ENCODE measurements at regions of chr6 and their contacts with region 1.

Region 1: GRCh38 chr6:31827286-31828079 is at the start of gene HSPA1B:
- DNase-seq: peak; percentile 96 to 99
- ATAC-seq: peak; percentile 85 to 93
- H3K4me3 ChIP-seq: peak within 1 kb of the TSS; percentile 48
- H3K27ac ChIP-seq: peak within 1 kb of the TSS; percentile 88 to 94
- H3K4me1 ChIP-seq: peaks cover 38% of the 10 kb centered on the region
- CTCF ChIP-seq: no peak
- EP300 ChIP-seq: no peak
- POLR2A ChIP-seq: peak; percentile 100
- RAD21 ChIP-seq: no peak
- polyA plus RNA-seq, gene HSPA1B: 52.7 and 70.6 TPM in 2 replicates

Region 2: GRCh38 chr6:31729515-31729978 is 97.9 kb before region 1 on chr6:
- CTCF ChIA-PET with region 1: interaction called, 16 read pairs
- POLR2A ChIA-PET with region 1: interaction called, 9 read pairs
- DNase-seq: peak; percentile 80 to 85
- ATAC-seq: peak; percentile 85 to 88
- H3K4me3 ChIP-seq: peak overlapping the region; percentile 58
- H3K27ac ChIP-seq: peak overlapping the region; percentile 76 to 95
- H3K4me1 ChIP-seq: peaks cover 17% of the 10 kb centered on the region
- CTCF ChIP-seq: peak; percentile 68
- EP300 ChIP-seq: no peak
- POLR2A ChIP-seq: peak; percentile 35
- RAD21 ChIP-seq: peak; percentile 77 to 85; a peak in 4 of 5 replicates

Region 3: GRCh38 chr6:31769684-31770371 is 57.7 kb before region 1 on chr6:
- CTCF ChIA-PET with region 1: interaction called, 36 read pairs
- POLR2A ChIA-PET with region 1: interaction called, 6 read pairs
- DNase-seq: peak; percentile 68 to 81
- ATAC-seq: peak; percentile 82 to 84
- H3K4me3 ChIP-seq: no peak overlapping the region
- H3K27ac ChIP-seq: no peak overlapping the region
- H3K4me1 ChIP-seq: peaks cover under 1% of the 10 kb centered on the region; the same call in 2 of the 3 replicates
- CTCF ChIP-seq: peak; percentile 54
- EP300 ChIP-seq: no peak
- POLR2A ChIP-seq: no peak
- RAD21 ChIP-seq: peak; percentile 51 to 61

Region 4: GRCh38 chr6:31795616-31796298 is 31.7 kb before region 1 on chr6 and contains the start of gene VARS1:
- CTCF ChIA-PET with region 1: interaction called, 19 read pairs
- POLR2A ChIA-PET with region 1: interaction called, 19 read pairs
- DNase-seq: peak; percentile 88 to 92
- ATAC-seq: peak; percentile 88 to 91
- H3K4me3 ChIP-seq: peak within 1 kb of the TSS; percentile 97
- H3K27ac ChIP-seq: peak within 1 kb of the TSS; percentile 94 to 97
- H3K4me1 ChIP-seq: peaks cover 23% of the 10 kb centered on the region; the same call in 2 of the 3 replicates
- CTCF ChIP-seq: peak; percentile 67
- EP300 ChIP-seq: no peak
- POLR2A ChIP-seq: no peak; the same call in none of the 2 replicates
- RAD21 ChIP-seq: peak; percentile 31 to 70; a peak in 4 of 5 replicates
- polyA plus RNA-seq, gene VARS1: 17.7 and 24.7 TPM in 2 replicates

Region 5: GRCh38 chr6:31806465-31807272 is 20.8 kb before region 1 on chr6 and contains the start of gene LSM2:
- CTCF ChIA-PET with region 1: interaction called, 5 read pairs
- POLR2A ChIA-PET with region 1: interaction called, 17 read pairs
- DNase-seq: peak; percentile 89 to 94
- ATAC-seq: peak; percentile 96 to 97
- H3K4me3 ChIP-seq: peak within 1 kb of the TSS; percentile 56
- H3K27ac ChIP-seq: peak within 1 kb of the TSS; percentile 84 to 92
- H3K4me1 ChIP-seq: peaks cover 12% of the 10 kb centered on the region
- CTCF ChIP-seq: peak; percentile 31
- EP300 ChIP-seq: no peak
- POLR2A ChIP-seq: peak; percentile 40
- RAD21 ChIP-seq: no peak; a peak in 1 of 5 replicates
- polyA plus RNA-seq, gene LSM2: 54.7 and 73.8 TPM in 2 replicates

Region 6: GRCh38 chr6:31815025-31815838 is 12.3 kb before region 1 on chr6 and contains the starts of genes HSPA1A and HSPA1L:
- CTCF ChIA-PET with region 1: interaction called, 6 read pairs
- POLR2A ChIA-PET with region 1: interaction called, 82 read pairs
- DNase-seq: peak; percentile 93 to 97
- ATAC-seq: peak; percentile 78 to 89
- H3K4me3 ChIP-seq: peak within 1 kb of the TSS; percentile 59
- H3K27ac ChIP-seq: peak within 1 kb of the TSS; percentile 96 to 97
- H3K4me1 ChIP-seq: peaks cover 30% of the 10 kb centered on the region
- CTCF ChIP-seq: no peak
- EP300 ChIP-seq: no peak
- POLR2A ChIP-seq: peak; percentile 100
- RAD21 ChIP-seq: no peak
- polyA plus RNA-seq, gene HSPA1A: 88.2 and 122 TPM in 2 replicates
- polyA plus RNA-seq, gene HSPA1L: 1.2 and 1.6 TPM in 2 replicates

Region 7: DNA sequence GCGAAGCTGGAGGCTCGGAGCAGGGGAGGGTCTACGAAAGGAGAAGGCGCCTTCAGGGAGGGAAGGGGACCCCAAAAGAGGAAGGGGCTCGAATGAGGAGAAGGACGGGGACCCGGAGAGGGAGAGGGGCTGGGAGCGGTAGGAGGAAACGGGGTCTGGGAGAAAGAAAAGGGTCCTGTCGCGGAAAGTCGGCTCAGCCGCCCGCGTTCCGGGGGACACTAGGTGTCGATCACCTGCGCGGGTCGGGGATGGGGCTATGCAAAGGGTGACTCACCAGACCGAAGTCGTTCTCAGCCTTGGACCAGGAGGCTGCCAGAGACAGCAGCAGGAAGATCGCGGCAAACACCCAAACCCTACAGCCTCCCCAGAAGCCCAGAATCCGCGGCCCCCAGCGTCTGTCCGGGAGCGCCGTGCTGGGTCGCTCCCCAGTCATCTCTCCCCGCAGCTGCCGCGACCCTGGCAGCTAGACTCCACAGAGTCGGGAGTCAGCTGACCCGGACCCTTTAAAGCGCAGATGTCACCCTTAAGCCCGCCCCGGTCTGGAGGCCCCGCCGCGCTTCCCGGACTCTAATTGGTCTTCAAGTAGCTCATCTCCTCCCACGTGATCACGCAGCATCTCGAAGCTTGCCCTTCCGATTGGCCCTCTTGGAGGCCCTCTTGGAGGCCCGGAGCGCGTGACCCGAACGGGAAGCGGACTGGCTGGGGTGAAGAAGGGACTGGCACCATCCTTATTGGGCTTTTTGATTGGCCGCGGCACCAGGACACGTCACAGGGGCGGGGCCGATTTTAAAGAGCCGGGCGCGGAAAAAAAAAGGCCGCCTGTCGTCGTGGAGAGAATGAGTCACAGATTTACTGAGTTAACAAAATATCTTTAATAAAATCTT is 35.1 kb after region 1 on chr6 and contains the start of gene NEU1:
- CTCF ChIA-PET with region 1: interaction called, 11 read pairs
- POLR2A ChIA-PET with region 1: interaction called, 6 read pairs
- DNase-seq: peak; percentile 99 to 100
- ATAC-seq: peak; percentile 97 to 98
- H3K4me3 ChIP-seq: peak within 1 kb of the TSS; percentile 74
- H3K27ac ChIP-seq: peak within 1 kb of the TSS; percentile 69 to 81
- H3K4me1 ChIP-seq: peaks cover 4% of the 10 kb centered on the region; the same call in 1 of the 3 replicates
- CTCF ChIP-seq: no peak
- EP300 ChIP-seq: no peak
- POLR2A ChIP-seq: peak; percentile 85
- RAD21 ChIP-seq: no peak
- polyA plus RNA-seq, gene NEU1: 15.8 and 20.6 TPM in 2 replicates

Region 8: DNA sequence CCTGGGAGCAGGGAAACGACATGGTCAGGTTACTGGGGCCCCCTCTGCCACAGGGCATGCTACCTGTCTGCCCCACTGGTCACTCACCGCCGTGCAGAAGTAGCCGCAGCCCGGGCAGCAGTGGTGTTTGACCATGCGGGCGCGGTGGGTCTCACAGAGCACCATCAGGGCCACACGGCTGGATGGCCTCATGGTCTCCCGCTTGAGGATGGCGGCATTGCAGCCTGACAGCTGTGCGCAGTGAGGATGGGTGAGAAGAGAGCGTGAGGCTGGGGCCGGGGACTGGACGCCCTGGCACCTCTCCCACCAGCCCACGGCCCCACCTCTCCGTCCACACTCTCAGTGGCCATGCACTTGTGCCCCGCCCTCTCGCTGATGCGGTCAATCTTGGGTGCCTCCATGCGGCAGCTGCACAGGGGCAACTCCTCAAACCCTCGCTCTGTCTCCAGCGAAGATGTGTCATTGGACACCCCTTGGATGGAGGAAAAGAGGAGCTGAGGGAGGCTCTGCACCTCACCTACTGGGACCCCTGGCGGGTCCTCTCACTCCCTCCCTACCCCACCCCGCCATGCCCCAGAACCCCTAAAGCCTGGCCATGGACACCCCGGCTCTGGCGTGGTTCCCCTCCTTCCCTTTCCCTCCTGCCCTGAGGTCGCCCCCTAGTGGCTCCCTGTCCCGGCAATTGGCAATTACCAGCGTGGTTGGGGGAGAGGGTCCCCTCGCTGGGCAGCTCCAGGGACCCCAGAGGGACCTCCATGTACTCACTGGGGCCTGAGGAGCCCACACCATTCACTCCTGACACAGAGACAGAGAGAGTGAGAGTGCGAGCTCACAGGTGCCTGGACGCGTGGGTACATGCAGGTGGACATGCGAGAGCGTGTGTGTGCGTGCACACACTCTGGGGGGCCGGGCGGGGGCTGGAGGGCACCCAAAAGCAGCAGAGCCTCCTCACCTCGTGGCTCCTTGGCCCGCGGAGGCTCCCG is 61.1 kb after region 1 on chr6:
- CTCF ChIA-PET with region 1: no interaction called
- POLR2A ChIA-PET with region 1: no interaction called
- DNase-seq: no peak
- ATAC-seq: peak in 1 of 2 experiments; percentile 74; a peak in 3 of 6 replicates
- H3K4me3 ChIP-seq: no peak overlapping the region
- H3K27ac ChIP-seq: no peak overlapping the region
- H3K4me1 ChIP-seq: no peaks in the 10 kb centered on the region
- CTCF ChIP-seq: peak; percentile 61
- EP300 ChIP-seq: no peak
- POLR2A ChIP-seq: no peak
- RAD21 ChIP-seq: peak; percentile 36 to 39; a peak in 2 of 5 replicates

Measured in A549 (cell line).